ENCODE measurements at regions of chr6 and their contacts with region 1.

Region 1: GRCh38 chr6:69732640-69733039 is 64.2 kb downstream of the LMBRD1 start:
- DNase-seq: no peak
- H3K4me3 Mint-ChIP-seq: no peak overlapping the region
- H3K27ac Mint-ChIP-seq: no peak overlapping the region
- H3K4me1 Mint-ChIP-seq: no peaks in the 10 kb centered on the region
- H3K27me3 Mint-ChIP-seq: no peaks in the 10 kb centered on the region

Region 2: GRCh38 chr6:69584913-69585729 is 147.5 kb before region 1 on chr6:
- CTCF ChIA-PET with region 1: no interaction called
- POLR2A ChIA-PET with region 1: no interaction called
- intact Hi-C with region 1: no loop called
- DNase-seq: peak; percentile 22
- H3K4me3 Mint-ChIP-seq: no peak overlapping the region
- H3K27ac Mint-ChIP-seq: no peak overlapping the region
- H3K4me1 Mint-ChIP-seq: peaks cover 16% of the 10 kb centered on the region
- H3K27me3 Mint-ChIP-seq: peaks cover 4% of the 10 kb centered on the region

Region 3: GRCh38 chr6:69696273-69696672 is 36.4 kb before region 1 on chr6:
- CTCF ChIA-PET with region 1: no interaction called
- POLR2A ChIA-PET with region 1: no interaction called
- intact Hi-C with region 1: no loop called
- DNase-seq: no peak
- H3K4me3 Mint-ChIP-seq: no peak overlapping the region
- H3K27ac Mint-ChIP-seq: no peak overlapping the region
- H3K4me1 Mint-ChIP-seq: peaks cover 11% of the 10 kb centered on the region
- H3K27me3 Mint-ChIP-seq: no peaks in the 10 kb centered on the region

Region 4: GRCh38 chr6:69866770-69867638 is 134.4 kb after region 1 on chr6:
- CTCF ChIA-PET with region 1: no interaction called
- POLR2A ChIA-PET with region 1: no interaction called
- intact Hi-C with region 1: loop called (anchors 5 kb)
- DNase-seq: peak; percentile 69
- H3K4me3 Mint-ChIP-seq: peak overlapping the region; percentile 73
- H3K27ac Mint-ChIP-seq: no peak overlapping the region
- H3K4me1 Mint-ChIP-seq: peaks cover 27% of the 10 kb centered on the region
- H3K27me3 Mint-ChIP-seq: peaks cover 16% of the 10 kb centered on the region

Region 5: GRCh38 chr6:70107852-70108629 is 375.4 kb after region 1 on chr6:
- CTCF ChIA-PET with region 1: interaction called, 7 read pairs
- POLR2A ChIA-PET with region 1: no interaction called
- intact Hi-C with region 1: loop called (anchors 2 kb)
- DNase-seq: no peak
- H3K4me3 Mint-ChIP-seq: no peak overlapping the region
- H3K27ac Mint-ChIP-seq: no peak overlapping the region
- H3K4me1 Mint-ChIP-seq: no peaks in the 10 kb centered on the region
- H3K27me3 Mint-ChIP-seq: peaks cover 9% of the 10 kb centered on the region

Region 6: DNA sequence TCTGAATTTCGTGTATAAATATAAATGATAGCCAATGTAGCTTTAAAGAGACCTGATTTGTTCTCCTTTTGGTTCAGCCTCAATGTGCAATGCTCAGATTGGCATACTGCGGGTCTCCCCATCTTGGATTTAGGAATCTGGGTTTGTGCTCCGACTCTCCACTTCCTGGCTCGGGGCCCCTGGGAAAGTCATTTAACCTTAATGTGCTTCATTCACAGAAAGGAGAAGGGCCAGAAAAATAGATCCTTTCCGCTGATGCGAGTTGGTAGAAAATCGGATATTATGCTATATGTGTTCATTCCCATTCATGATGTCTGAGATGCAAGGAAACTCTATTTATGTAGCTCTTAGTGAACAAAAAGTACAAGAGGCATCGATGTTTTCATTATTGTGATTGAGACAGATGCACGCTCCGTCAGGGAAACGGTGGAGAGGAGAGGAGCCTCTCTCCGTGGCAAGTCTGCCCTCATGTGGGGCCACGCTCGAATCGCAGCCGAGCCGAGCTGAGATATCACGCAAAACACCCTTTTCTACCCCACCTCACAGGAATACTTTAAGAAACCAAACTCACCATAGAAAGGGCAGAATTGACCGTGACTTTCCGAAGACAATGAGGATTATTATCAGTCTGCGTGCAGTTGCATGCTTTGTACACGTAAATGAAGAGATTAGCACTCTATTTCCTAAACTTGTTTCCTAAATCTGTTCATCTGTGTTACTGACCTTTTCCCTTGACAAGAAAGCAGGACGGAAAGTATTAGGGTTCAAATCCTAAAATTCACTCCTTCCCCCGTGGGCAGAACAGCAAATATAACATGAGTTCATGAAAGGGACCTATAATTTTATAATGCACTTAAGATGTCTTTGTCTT is 433.7 kb after region 1 on chr6:
- CTCF ChIA-PET with region 1: no interaction called
- POLR2A ChIA-PET with region 1: no interaction called
- intact Hi-C with region 1: loop called (anchors 5 kb)
- DNase-seq: peak; percentile 51
- H3K4me3 Mint-ChIP-seq: no peak overlapping the region
- H3K27ac Mint-ChIP-seq: no peak overlapping the region
- H3K4me1 Mint-ChIP-seq: peaks cover 3% of the 10 kb centered on the region
- H3K27me3 Mint-ChIP-seq: peaks cover 33% of the 10 kb centered on the region

Measured in activated CD4-positive, alpha-beta memory T cell treated with anti-CD3 and anti-CD28 coated beads for 36 hours (primary cell).